Activated T-helper 1 cell treated with anti-CD3 and anti-CD28 coated beads, Interleukin-12 subunit alpha, Interleukin-12 subunit beta, Interleukin-2, Interleukin-4 antibody, amounts not matched to agents 30 ng/mL and 10 ng/mL and 1 ng/mL, durations not matched to agents 14 hours and 24 hours and 36 hours (primary cell): ENCODE measurements at regions of chr2 and their contacts with region 1.

Region 1: GRCh38 chr2:147182260-147182659 is 662.6 kb upstream of the ACVR2A start:
- DNase-seq: peak; percentile 67
- H3K4me3 Mint-ChIP-seq: peak overlapping the region; percentile 40
- H3K27ac Mint-ChIP-seq: peak overlapping the region; percentile 86
- H3K4me1 Mint-ChIP-seq: peaks cover 32% of the 10 kb centered on the region
- H3K27me3 Mint-ChIP-seq: peaks cover 5% of the 10 kb centered on the region

Region 2: DNA sequence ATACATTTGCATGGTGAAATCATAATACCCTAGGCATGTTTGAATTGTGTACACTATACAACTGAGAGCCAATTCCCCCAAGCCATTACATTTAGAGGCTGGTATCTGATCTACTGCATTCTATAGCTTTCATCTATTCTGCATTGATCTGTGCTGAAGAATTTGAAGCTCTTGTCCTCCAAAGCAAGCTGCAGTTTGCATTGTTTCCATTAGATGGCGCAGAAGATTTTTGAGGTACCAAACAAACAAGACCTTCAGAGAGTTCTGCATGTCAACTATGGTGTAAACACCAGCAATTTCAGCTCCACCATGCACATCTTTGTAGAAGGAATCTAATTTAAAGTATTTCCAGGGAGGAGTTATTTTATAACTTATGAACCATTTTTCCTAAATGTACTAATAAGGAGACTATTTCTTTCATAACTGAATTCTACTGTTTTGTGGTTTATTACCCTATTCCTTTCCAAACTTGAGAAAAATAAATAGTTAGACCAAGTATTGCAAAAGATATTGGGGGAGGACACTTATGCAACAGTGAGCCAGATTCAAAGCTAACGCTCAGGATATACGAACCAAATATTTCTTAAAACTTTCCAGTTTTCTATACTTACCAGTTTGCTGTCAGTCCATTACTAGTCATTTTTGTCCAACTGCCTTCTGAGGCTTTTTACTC is 99.3 kb before region 1 on chr2:
- intact Hi-C with region 1: loop called (anchors 5 kb)
- DNase-seq: peak; percentile 49
- H3K4me3 Mint-ChIP-seq: no peak overlapping the region
- H3K27ac Mint-ChIP-seq: no peak overlapping the region
- H3K4me1 Mint-ChIP-seq: peaks cover 24% of the 10 kb centered on the region
- H3K27me3 Mint-ChIP-seq: peaks cover 5% of the 10 kb centered on the region

Region 3: GRCh38 chr2:147204102-147204501 is 21.8 kb after region 1 on chr2:
- intact Hi-C with region 1: loop called (anchors 1 kb)
- DNase-seq: no peak
- H3K4me3 Mint-ChIP-seq: no peak overlapping the region
- H3K27ac Mint-ChIP-seq: no peak overlapping the region
- H3K4me1 Mint-ChIP-seq: peaks cover 4% of the 10 kb centered on the region
- H3K27me3 Mint-ChIP-seq: no peaks in the 10 kb centered on the region

Region 4: DNA sequence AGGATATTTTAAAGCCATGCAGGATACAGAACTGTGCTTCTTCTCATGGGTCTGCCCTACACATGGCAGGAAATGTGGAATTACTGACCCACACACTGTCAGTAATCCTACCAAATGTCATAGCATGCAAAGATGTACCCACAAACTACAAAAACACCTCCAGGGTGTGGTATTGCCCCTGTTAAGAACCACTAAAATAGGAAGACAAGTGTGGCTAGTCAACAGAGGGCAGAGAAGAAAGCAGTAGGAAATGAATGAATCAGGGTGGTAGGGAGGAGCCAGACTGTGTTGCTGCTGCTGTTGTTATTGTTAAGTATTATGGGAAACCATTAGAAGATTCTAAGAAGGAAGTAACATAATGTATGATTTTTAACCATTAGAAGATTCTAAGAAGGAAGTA is 105.9 kb after region 1 on chr2:
- intact Hi-C with region 1: loop called (anchors 2 kb)
- DNase-seq: peak; percentile 37
- H3K4me3 Mint-ChIP-seq: peak overlapping the region; percentile 8
- H3K27ac Mint-ChIP-seq: peak overlapping the region; percentile 70
- H3K4me1 Mint-ChIP-seq: peaks cover 43% of the 10 kb centered on the region
- H3K27me3 Mint-ChIP-seq: no peaks in the 10 kb centered on the region

Region 5: DNA sequence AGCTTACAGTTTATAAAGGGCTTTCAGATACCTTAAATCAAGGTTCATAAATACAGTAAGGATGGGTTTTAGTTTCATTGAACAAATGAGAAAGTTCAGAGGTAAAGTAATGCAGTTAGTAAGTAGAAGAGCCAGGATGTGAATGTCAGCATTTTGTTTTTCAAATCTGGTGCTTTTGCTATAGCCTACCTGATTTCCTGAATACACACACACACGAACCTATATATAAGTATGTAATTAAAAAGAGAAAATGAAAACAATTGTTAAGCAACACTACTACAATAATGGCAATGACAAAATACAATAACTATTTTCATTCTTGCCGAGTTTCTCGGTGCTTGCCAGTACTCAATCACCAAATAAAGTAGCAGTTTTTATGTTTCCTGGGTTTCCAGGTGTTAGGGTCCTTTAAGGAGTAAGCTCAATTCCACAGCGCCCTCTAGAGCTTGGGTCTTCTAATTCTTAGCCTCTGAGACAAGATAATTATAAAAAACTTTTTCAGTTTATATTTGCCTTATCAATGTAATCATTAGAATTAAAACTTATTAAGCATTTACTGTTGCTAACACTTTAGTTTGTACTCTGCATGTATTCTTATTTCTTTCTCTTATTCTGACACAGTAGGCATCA is 149.6 kb after region 1 on chr2:
- intact Hi-C with region 1: loop called (anchors 2 kb)
- DNase-seq: peak; percentile 11
- H3K4me3 Mint-ChIP-seq: no peak overlapping the region
- H3K27ac Mint-ChIP-seq: no peak overlapping the region
- H3K4me1 Mint-ChIP-seq: peaks cover 33% of the 10 kb centered on the region
- H3K27me3 Mint-ChIP-seq: peaks cover 6% of the 10 kb centered on the region

Region 6: DNA sequence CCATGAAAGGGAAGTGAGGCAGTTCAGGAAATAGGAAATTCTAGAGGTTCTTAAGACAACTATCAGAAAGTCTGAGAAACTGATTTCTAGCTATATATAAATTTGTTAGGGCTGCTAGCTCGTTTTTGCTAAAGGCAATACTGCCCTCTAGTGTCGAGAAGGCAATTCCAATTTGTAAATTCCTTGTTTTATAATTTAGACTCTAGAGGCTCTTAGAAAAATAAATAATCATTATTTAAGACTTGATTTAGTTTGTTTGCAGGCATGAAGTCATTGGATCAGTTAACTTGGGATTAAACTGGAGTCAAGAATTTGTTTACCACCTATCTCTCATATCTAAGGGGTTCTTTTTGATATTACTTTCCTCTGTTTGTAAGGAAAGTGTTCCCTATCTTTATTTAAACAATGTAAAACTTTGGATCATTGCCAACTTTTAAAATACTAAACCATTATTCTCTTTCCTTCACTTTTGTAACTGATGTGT is 728.8 kb after region 1 on chr2:
- intact Hi-C with region 1: loop called (anchors 1 kb)
- DNase-seq: peak; percentile 4
- H3K4me3 Mint-ChIP-seq: no peak overlapping the region
- H3K27ac Mint-ChIP-seq: no peak overlapping the region
- H3K4me1 Mint-ChIP-seq: peaks cover 11% of the 10 kb centered on the region
- H3K27me3 Mint-ChIP-seq: peaks cover 2% of the 10 kb centered on the region